Activated B cell treated with CpG ODN at 0.5 μM for 24 hours (primary cell): ENCODE measurements at regions of chr2 and their contacts with region 1.

Region 1: GRCh38 chr2:216491793-216492596 is 6.6 kb upstream of the RPL37A start:
- DNase-seq: peak; percentile 48
- ATAC-seq: peak; percentile 93
- H3K4me3 Mint-ChIP-seq: peak overlapping the region; percentile 56
- H3K27ac Mint-ChIP-seq: peak overlapping the region; percentile 91
- H3K4me1 Mint-ChIP-seq: peaks cover 46% of the 10 kb centered on the region
- H3K27me3 Mint-ChIP-seq: no peaks in the 10 kb centered on the region
- CTCF ChIP-seq: no peak

Region 2: DNA sequence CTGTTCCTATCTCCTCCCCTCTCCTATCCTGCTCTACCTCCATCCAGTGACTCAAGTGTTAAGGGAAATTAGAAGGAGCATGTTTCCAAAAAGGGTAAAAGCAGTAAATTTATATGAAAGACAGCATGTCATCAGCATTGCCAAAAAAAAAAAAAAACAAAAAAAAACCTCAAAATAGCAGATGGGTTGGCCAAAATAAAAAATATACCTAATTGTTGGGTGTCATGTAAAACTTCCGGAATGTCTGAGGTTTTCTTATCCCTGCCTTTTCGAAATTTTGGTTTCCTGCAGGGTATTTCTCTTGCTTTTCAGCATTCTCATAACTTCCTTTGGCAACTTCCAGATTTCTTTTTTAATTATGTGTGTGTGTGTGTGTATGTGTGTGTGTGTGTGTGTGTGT is 814.5 kb before region 1 on chr2:
- CTCF ChIA-PET with region 1: no interaction called
- POLR2A ChIA-PET with region 1: no interaction called
- intact Hi-C with region 1: no loop called
- DNase-seq: no peak
- ATAC-seq: no peak
- H3K4me3 Mint-ChIP-seq: no peak overlapping the region
- H3K27ac Mint-ChIP-seq: no peak overlapping the region
- H3K4me1 Mint-ChIP-seq: no peaks in the 10 kb centered on the region
- H3K27me3 Mint-ChIP-seq: peaks cover 2% of the 10 kb centered on the region
- CTCF ChIP-seq: no peak

Region 3: GRCh38 chr2:216474925-216475670 is 16.9 kb before region 1 on chr2:
- CTCF ChIA-PET with region 1: no interaction called
- POLR2A ChIA-PET with region 1: interaction called, 3 read pairs
- intact Hi-C with region 1: loop called (anchors 2 kb)
- DNase-seq: no peak
- ATAC-seq: peak; percentile 49
- H3K4me3 Mint-ChIP-seq: peak overlapping the region; percentile 52
- H3K27ac Mint-ChIP-seq: no peak overlapping the region
- H3K4me1 Mint-ChIP-seq: peaks cover 14% of the 10 kb centered on the region
- H3K27me3 Mint-ChIP-seq: no peaks in the 10 kb centered on the region
- CTCF ChIP-seq: no peak